GM12878 (cell line): ENCODE measurements at regions of chr5 and their contacts with region 1.

Region 1: GRCh38 chr5:52334367-52334766 is 453.3 kb upstream of the ITGA1 start:
- DNase-seq: no peak
- ATAC-seq: no peak
- H3K4me3 ChIP-seq: no peak overlapping the region
- H3K27ac ChIP-seq: no peak overlapping the region
- H3K4me1 ChIP-seq: no peaks in the 10 kb centered on the region
- H3K27me3 ChIP-seq: no peaks in the 10 kb centered on the region
- CTCF ChIP-seq: no peak
- EP300 ChIP-seq: no peak
- POLR2A ChIP-seq: no peak
- RAD21 ChIP-seq: no peak

Region 2: DNA sequence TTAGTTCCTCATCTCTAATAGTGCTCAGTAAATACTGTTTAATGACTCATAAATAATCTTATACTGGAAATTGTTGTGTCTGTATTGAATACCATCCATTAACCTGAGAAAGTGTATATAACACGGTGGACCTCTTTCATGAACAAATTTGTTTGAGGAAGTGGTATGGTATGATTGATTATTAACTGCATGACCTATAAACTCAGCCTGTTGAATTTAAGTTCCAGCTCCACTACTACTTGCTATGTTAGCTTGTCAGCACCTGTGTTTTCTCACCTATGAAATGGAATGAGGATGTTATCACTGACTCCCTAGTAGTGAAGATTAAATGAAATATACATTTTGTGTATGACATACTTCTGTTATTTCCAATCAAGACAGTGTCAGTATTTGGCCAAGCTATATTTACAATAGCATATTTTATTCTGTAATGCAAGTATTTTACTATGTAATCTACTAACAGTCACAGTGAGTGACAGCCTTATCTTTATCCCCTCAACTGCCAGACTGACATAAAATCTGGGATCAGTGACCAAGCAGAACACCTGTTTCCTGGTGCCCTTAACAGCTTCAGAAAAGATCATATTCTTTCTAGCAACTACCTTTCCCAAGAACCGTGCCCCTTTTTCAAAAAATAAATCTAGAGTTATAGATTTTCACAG is 376.1 kb after region 1 on chr5:
- CTCF ChIA-PET with region 1: no interaction called
- POLR2A ChIA-PET with region 1: no interaction called
- RAD21 ChIA-PET with region 1: no interaction called
- SMC1A ChIA-PET with region 1: no interaction called
- in situ Hi-C with region 1: no loop called
- intact Hi-C with region 1: loop called (anchors 5 kb)
- DNase-seq: no peak
- ATAC-seq: peak; percentile 16; the same call in 2 of the 3 replicates
- H3K4me3 ChIP-seq: no peak overlapping the region
- H3K27ac ChIP-seq: no peak overlapping the region
- H3K4me1 ChIP-seq: no peaks in the 10 kb centered on the region
- H3K27me3 ChIP-seq: peaks cover 0 to 1% of the 10 kb centered on the region in 2 experiments; a peak in 1 of 4 replicates
- CTCF ChIP-seq: no peak
- EP300 ChIP-seq: no peak
- POLR2A ChIP-seq: no peak
- RAD21 ChIP-seq: no peak